Panc1 (cell line): ENCODE measurements at regions of chr4 and their contacts with region 1.

Region 1: DNA sequence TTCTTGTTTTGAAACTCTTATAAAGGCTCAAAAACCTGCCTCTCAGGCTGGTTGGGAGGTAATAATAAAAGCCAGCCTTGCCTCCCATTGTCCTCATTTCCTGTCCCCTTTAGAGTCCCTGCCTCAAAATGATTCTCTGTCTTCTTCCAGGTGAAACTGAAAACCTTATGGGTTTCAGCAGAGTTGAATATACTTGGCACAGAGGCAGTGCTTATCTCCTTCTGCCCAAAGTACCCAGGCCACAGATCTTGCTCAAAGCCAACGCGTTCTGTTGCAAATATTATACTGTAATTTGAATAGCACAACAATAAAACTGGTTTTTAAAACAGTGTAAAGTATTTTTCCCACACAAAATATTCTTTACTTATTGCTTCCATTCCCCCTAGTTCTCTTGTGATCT is 183.1 kb upstream of the GIMD1 start:
- DNase-seq: no peak
- ATAC-seq: no peak
- H3K4me3 ChIP-seq: no peak overlapping the region
- H3K27ac ChIP-seq: no peak overlapping the region
- H3K4me1 ChIP-seq: no peaks in the 10 kb centered on the region
- H3K27me3 ChIP-seq: no peaks in the 10 kb centered on the region
- CTCF ChIP-seq: no peak

Region 2: DNA sequence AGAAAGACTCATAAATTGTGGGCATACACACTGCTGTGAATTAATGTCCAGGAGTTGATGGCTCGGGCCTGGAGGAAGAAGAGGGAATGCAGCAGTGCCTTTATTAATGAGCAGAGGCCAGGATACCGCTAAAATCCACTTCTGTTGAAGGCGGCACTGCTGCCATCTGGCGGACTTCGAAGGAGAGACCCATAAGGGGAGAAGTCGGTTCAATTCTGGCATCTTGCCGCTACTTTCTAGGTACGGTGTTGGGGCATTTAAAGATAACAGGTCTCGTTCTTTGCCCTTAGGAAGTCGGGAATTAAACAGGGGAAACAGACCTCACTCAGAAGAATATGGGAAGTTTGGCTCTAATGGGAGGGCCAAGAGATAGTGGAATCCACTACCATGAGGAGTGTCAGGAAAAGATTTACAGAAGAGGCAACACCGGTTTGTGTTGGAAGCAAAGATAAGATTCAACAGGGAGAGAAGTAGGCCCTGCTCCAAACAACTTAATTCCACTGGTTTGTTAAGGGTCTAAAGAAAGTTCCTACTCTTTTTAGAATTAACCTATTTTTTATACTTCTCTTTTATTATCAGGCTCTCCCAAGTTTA is 49.5 kb before region 1 on chr4:
- CTCF ChIA-PET with region 1: no interaction called
- POLR2A ChIA-PET with region 1: no interaction called
- in situ Hi-C with region 1: no loop called
- intact Hi-C with region 1: no loop called
- DNase-seq: peak; percentile 10
- ATAC-seq: peak; percentile 71
- H3K4me3 ChIP-seq: no peak overlapping the region
- H3K27ac ChIP-seq: no peak overlapping the region
- H3K4me1 ChIP-seq: no peaks in the 10 kb centered on the region
- H3K27me3 ChIP-seq: no peaks in the 10 kb centered on the region; the same call in 1 of the 2 replicates
- CTCF ChIP-seq: peak; percentile 76

Region 3: DNA sequence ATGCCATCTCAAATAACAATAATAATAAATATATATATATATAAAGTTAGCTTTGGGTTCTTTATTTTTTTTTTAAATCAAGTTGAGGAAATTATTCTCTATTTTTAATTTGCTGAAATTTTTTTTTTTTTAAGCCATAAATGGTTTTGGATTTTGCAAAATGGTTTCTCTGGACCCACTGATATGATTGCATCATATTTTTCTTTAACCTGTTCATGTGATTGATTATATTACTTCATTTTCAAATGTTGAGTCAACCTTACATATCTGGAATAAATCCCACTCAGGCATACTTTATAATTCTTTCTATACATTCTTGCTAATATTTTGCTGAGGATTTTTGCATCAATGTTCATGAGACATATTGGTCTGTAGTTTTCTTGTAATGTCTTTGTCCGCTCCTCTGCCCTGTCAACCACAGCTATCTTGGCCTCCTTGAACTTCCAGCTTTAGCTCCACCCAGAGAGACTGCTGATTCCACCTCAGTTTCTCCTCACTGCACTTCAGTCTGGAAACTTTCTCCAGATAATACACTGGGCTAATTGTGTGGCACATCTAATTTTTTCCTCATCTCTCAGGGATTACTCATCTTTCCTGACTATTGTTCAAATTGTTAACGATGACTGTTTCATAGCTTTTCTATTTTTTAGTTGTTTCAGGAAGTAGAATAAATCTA is 22.2 kb before region 1 on chr4:
- CTCF ChIA-PET with region 1: interaction called, 10 read pairs
- POLR2A ChIA-PET with region 1: no interaction called
- in situ Hi-C with region 1: no loop called
- intact Hi-C with region 1: no loop called
- DNase-seq: no peak
- ATAC-seq: no peak
- H3K4me3 ChIP-seq: no peak overlapping the region
- H3K27ac ChIP-seq: no peak overlapping the region
- H3K4me1 ChIP-seq: no peaks in the 10 kb centered on the region
- H3K27me3 ChIP-seq: no peaks in the 10 kb centered on the region
- CTCF ChIP-seq: no peak